PC-9 (cell line): ENCODE measurements at regions of chr7 and their contacts with region 1.

Region 1: DNA sequence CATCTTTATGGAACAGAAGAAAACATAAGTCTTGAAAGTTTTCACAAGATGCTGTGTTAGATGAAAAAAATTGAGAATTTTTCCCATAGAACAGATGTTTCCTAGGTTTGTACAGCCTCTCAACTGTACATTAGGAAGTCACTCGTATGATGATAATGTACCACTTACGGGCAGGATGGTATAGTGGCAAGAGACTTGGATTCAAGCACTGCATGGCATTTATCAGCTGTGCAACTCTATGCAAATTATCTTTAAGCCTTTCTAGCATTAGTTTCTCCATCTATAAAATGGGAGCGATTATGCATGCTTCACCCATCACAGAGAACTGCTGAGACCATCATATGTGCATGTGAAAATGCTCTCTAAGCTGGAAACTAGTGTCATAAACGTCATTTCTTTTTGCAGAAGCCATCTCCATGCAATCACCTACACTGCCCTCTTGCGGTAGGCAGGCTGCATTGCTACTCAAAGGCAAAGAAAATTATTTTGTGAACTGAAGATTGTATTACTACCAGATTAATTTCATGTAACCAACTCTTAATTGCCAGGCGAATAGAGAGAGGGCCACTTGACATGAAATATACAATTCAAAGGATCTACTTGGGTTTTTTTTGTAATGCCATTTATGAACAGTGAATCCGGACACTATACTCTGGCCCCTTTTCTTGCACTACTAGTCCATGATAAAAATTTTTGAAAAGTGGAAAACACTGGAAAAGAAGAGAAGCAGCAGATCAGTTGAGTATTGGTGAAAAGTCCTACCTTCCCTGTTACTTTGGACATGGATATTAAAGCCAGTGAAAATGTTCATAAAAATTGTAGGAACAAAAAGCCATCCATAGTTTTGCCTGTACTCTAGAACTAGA is 102.3 kb downstream of the JAZF1 start:
- DNase-seq: peak in 1 of 2 experiments; percentile 47
- H3K4me3 ChIP-seq: no peak overlapping the region
- H3K27ac ChIP-seq: no peak overlapping the region
- H3K4me1 ChIP-seq: peaks cover 16% of the 10 kb centered on the region
- H3K27me3 ChIP-seq: no peaks in the 10 kb centered on the region
- CTCF ChIP-seq: peak; percentile 99

Region 2: GRCh38 chr7:27689591-27690164 is 388.6 kb before region 1 on chr7:
- CTCF ChIA-PET with region 1: no interaction called
- POLR2A ChIA-PET with region 1: no interaction called
- intact Hi-C with region 1: loop called (anchors 5 kb)
- DNase-seq: peak; percentile 49 to 59
- H3K4me3 ChIP-seq: no peak overlapping the region
- H3K27ac ChIP-seq: no peak overlapping the region
- H3K4me1 ChIP-seq: peaks cover 16% of the 10 kb centered on the region
- H3K27me3 ChIP-seq: no peaks in the 10 kb centered on the region
- CTCF ChIP-seq: peak; percentile 69

Region 3: DNA sequence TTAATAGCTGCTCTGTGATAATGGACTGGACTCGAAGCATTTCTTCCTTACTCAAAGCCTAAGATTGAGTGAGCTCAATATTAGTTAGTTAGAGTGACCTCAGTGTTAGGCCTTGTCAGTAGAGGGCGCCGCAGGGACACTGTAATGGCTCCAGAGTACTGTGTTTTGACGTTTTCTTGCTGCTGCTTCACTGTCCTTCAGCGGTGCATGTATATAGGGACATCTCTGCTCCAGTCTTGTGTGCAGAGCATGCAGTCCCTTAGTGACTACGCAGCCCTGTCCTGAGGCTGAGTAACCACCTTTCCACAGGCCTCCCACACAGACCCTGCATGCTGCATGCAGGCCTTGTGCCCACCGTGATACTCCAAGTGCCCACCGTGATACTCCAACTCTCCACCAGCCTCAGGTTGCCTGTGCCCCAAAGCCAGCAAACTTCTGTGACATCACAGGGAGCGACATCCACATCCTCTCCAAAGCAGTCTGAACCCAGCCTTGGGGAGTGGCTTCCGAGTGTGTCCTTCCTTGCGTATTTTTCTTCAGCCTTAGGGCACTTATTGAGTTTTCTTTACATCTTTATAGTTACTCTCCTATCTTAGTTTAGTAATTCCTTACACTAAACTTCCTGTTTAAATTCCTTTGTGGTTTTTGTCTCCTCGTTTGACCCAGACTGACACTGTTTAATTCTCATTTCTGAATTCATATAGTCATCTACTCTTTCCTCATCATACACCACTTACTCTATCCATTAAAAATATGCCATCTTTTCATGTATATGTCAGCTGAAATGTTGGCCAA is 15.9 kb before region 1 on chr7:
- CTCF ChIA-PET with region 1: interaction called, 20 read pairs
- POLR2A ChIA-PET with region 1: no interaction called
- intact Hi-C with region 1: no loop called
- DNase-seq: peak; percentile 57 to 87
- H3K4me3 ChIP-seq: no peak overlapping the region
- H3K27ac ChIP-seq: peak overlapping the region; percentile 6
- H3K4me1 ChIP-seq: peaks cover 34% of the 10 kb centered on the region
- H3K27me3 ChIP-seq: no peaks in the 10 kb centered on the region
- CTCF ChIP-seq: peak; percentile 75